ENCODE measurements at regions of chr6 and their contacts with region 1.

Region 1: DNA sequence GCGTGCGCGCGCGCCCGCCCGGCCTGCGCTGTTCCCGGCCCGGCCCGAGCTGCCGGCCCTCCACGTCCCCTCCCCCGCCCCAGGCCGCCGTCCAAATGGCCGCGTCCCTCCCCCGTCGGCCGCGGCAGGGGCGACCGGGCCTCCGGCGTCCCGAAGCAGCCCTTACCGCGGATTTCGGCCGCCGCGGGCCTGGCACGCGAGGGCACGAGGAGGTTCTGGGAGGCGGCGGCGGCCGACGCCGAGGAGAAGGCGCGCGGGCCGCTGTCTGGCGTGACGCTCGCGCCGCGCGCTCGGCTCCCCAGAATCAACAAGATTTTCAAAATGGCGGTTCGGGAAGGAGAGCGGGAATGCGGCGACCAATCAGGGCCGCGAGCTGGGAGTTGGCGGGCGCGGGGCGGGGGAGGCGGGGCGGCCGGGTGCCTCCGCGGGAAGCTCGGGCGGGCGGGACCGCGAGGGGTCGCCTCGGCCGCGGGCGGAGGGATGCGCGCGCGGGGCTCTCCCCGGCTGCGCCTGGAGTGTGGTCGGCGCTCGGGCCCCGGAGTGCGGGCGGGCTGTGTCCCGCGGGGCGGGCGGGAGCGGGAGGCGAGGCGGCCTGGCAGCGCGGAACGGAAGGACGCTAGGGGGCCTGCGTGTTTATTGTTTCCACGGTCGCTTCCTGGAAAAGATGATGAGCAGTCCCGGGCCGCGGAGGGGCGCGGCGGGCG is at the start of gene DEK:
- DNase-seq: peak; percentile 81
- ATAC-seq: peak; percentile 62
- H3K4me3 Mint-ChIP-seq: peak within 1 kb of the TSS; percentile 89
- H3K27ac Mint-ChIP-seq: peak within 1 kb of the TSS; percentile 94
- H3K4me1 Mint-ChIP-seq: peaks cover 48% of the 10 kb centered on the region
- H3K27me3 Mint-ChIP-seq: no peaks in the 10 kb centered on the region
- CTCF ChIP-seq: no peak
- total RNA-seq, gene DEK: 80.8 and 81.9 TPM in 2 replicates

Region 2: DNA sequence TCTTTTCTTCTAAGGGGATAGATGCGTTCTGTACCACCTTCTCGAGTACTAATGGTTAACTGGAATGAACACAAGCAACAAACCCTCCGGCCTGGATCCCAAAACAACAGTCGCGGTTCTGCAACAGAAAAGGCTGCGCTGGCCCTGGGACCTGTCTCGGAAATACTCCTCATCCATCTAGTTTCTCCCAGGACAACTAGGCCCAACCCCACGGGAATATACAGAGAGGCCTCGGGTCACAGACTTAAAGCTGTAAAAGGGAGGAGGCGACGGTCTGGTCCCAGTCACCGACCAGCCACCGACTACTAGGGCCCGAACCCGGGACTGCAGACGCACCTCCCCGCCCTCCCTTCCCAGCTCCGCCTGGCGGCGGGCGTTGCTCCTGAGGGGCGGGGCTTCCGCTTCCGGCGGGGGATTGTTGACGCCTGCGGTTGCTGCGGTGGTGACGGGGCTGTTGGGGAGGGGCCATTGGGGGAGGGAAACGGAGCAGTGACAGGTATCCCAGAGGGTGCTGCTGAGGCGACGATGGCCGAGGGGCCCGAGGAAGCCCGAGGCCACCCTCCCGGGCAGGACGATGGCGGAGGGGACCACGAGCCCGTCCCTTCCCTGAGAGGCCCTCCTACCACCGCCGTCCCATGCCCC is 664.4 kb before region 1 on chr6 and contains the start of gene FAM8A1:
- CTCF ChIA-PET with region 1: no interaction called
- POLR2A ChIA-PET with region 1: no interaction called
- intact Hi-C with region 1: loop called (anchors 5 kb)
- DNase-seq: peak; percentile 88
- ATAC-seq: peak; percentile 91
- H3K4me3 Mint-ChIP-seq: peak within 1 kb of the TSS; percentile 80
- H3K27ac Mint-ChIP-seq: peak within 1 kb of the TSS; percentile 78
- H3K4me1 Mint-ChIP-seq: peaks cover 11% of the 10 kb centered on the region
- H3K27me3 Mint-ChIP-seq: no peaks in the 10 kb centered on the region
- CTCF ChIP-seq: no peak
- total RNA-seq, gene FAM8A1: 2.6 and 3.0 TPM in 2 replicates

Region 3: DNA sequence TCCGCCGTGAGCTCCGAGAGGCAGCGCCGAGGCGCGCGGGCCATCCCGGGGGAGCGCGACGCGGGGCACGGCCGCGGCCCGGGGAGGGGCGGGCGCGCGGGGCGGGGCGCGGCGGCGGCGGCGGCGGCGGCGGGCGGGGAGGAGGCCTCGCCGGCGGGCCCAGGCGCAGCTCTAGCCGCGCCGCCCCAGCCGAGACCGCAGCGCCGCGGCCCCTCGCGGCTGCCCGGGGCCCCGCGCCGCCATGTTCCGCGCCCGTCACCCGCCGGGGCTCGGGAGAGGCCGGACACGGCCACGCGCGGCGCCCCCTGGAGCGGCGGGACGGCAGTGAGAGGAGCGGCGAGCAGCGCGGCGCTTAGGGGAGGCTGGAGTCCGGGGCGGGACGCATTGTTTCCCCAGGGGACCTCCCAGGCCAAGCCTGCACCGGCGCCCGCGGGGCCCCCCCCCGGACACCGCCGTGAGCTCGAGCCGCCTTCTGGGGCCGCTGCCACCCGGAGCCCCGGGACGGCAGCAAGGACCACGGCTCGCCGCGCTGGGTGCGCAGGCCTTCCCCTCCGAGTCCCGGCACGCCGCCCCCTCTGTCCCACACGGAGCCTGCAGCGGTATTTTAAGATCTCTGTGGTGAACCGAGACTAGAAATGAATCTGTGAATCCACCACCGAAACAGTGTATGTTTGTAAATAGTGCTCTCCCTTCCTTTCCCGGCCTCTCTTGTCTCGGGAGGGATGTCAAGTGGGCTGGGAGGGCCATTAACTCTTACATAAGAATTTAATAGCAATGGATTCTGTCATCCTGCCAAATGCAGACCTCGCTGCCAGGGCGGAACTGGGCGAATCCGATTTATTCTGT is 276.6 kb before region 1 on chr6 and contains the start of gene KIF13A:
- CTCF ChIA-PET with region 1: no interaction called
- POLR2A ChIA-PET with region 1: no interaction called
- intact Hi-C with region 1: loop called (anchors 2 kb)
- DNase-seq: peak; percentile 72
- ATAC-seq: peak; percentile 76
- H3K4me3 Mint-ChIP-seq: peak within 1 kb of the TSS; percentile 91
- H3K27ac Mint-ChIP-seq: peak within 1 kb of the TSS; percentile 88
- H3K4me1 Mint-ChIP-seq: peaks cover 32% of the 10 kb centered on the region
- H3K27me3 Mint-ChIP-seq: no peaks in the 10 kb centered on the region
- CTCF ChIP-seq: no peak
- total RNA-seq, gene KIF13A: 13.1 and 14.1 TPM in 2 replicates

Region 4: GRCh38 chr6:18211338-18211737 is 53.0 kb before region 1 on chr6:
- CTCF ChIA-PET with region 1: no interaction called
- POLR2A ChIA-PET with region 1: interaction called, 5 read pairs
- intact Hi-C with region 1: loop called (anchors 10 kb)
- DNase-seq: no peak
- ATAC-seq: peak; percentile 56
- H3K4me3 Mint-ChIP-seq: no peak overlapping the region
- H3K27ac Mint-ChIP-seq: no peak overlapping the region
- H3K4me1 Mint-ChIP-seq: peaks cover 29% of the 10 kb centered on the region
- H3K27me3 Mint-ChIP-seq: no peaks in the 10 kb centered on the region
- CTCF ChIP-seq: no peak

Region 5: GRCh38 chr6:18323935-18324705 is 59.7 kb after region 1 on chr6:
- CTCF ChIA-PET with region 1: no interaction called
- POLR2A ChIA-PET with region 1: no interaction called
- intact Hi-C with region 1: loop called (anchors 1 kb)
- DNase-seq: no peak
- ATAC-seq: peak; percentile 62
- H3K4me3 Mint-ChIP-seq: no peak overlapping the region
- H3K27ac Mint-ChIP-seq: no peak overlapping the region
- H3K4me1 Mint-ChIP-seq: peaks cover 34% of the 10 kb centered on the region
- H3K27me3 Mint-ChIP-seq: no peaks in the 10 kb centered on the region
- CTCF ChIP-seq: peak; percentile 44

Region 6: GRCh38 chr6:18503593-18504231 is 239.3 kb after region 1 on chr6:
- CTCF ChIA-PET with region 1: interaction called, 3 read pairs
- POLR2A ChIA-PET with region 1: no interaction called
- intact Hi-C with region 1: loop called (anchors 1 kb)
- DNase-seq: no peak
- ATAC-seq: peak; percentile 88
- H3K4me3 Mint-ChIP-seq: peak overlapping the region; percentile 73
- H3K27ac Mint-ChIP-seq: no peak overlapping the region
- H3K4me1 Mint-ChIP-seq: peaks cover 14% of the 10 kb centered on the region
- H3K27me3 Mint-ChIP-seq: no peaks in the 10 kb centered on the region
- CTCF ChIP-seq: peak; percentile 79